ENCODE measurements at regions of chr20 and their contacts with region 1.

Region 1: DNA sequence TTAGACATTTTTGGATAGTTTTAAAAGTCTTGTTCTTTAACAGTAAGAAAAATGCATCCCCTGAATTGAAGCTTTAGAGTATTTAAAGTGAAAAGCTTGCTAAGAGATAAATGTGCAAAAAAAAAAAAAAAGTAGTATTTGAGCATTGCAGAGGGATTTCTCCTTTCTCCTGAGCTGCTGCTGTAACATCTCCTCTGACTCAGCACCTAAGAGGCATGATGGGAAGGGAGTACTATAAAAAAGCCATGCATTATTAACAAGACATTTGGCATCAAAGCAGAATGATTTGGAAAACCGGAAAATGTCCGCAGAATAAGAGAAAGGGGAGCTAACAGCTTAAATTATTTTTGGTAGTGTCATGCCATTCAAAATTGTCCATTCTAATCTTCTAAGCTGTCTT is 27.9 kb downstream of the B4GALT5 start:
- DNase-seq: no peak
- H3K4me3 ChIP-seq: no peak overlapping the region
- H3K27ac ChIP-seq: no peak overlapping the region
- H3K4me1 ChIP-seq: peaks cover 9% of the 10 kb centered on the region
- H3K27me3 ChIP-seq: no peaks in the 10 kb centered on the region
- CTCF ChIP-seq: no peak
- EP300 ChIP-seq: no peak
- POLR2A ChIP-seq: no peak

Region 2: GRCh38 chr20:49631061-49631788 is 54.6 kb before region 1 on chr20:
- intact Hi-C with region 1: loop called in 1 of 4 experiments (anchors 10 kb)
- DNase-seq: peak; percentile 60 to 76 (median 69)
- H3K4me3 ChIP-seq: no peak overlapping the region
- H3K27ac ChIP-seq: peak overlapping the region; percentile 49 to 79
- H3K4me1 ChIP-seq: peaks cover 27% of the 10 kb centered on the region
- H3K27me3 ChIP-seq: no peaks in the 10 kb centered on the region
- CTCF ChIP-seq: no peak
- EP300 ChIP-seq: no peak
- POLR2A ChIP-seq: no peak

Region 3: DNA sequence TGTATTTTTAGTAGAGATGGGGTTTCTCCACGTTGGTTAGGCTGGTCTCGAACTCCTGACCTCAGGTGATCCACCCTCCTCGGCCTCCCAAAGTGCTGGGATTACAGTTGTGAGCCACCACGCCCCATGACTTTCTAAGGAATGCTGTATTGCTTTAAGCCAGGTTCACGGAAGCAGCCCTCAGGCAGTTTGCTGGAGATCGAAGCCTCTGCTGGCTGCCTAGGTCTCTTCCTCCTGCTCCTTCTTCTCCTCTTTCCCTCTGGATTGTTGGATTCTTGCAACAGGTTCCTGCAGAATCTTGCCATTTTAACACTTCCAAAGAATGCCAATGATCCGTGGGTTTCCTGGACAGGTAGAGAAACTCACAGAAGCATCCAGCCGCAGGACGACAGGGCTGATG is 57.1 kb after region 1 on chr20:
- intact Hi-C with region 1: no loop called
- DNase-seq: no peak
- H3K4me3 ChIP-seq: no peak overlapping the region
- H3K27ac ChIP-seq: no peak overlapping the region
- H3K4me1 ChIP-seq: peaks cover 2% of the 10 kb centered on the region
- H3K27me3 ChIP-seq: no peaks in the 10 kb centered on the region
- CTCF ChIP-seq: no peak
- EP300 ChIP-seq: no peak
- POLR2A ChIP-seq: no peak

Measured in ovary (tissue), 10 donors.